ENCODE measurements at regions of chr5 and their contacts with region 1.

Region 1: DNA sequence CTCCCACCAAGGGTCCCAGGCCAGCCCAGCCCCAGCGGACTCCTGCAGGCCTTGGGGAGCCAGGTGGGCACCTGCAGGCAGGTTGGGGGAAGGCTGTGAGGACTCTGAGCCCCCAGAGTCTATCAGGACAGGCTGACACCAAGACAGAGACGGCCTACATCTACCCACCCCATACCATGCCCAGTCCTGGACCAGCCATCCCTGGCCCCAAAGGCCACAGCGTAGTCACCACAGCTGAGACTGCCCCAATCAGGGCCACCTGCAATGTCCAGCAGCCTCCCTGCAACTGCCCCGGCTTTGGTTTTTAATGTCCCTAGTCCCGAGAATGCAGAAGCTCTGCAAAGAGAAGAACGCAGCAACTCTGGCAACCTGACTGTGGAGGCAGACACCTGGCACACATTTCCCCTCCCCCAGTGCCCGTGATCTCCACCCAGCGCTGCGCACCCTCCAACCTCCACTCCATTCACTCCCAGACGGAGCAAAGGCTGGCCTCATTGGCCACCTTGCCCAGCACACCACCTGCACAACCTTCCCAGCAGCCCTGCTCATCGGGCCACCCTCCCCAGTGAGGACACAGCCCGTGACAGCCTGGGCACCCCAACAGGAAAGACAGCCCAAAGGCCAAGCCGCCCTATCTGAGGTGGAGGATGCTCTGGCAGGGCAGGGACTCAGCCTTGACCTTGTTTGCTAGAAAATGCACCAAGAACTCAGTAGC is 14.9 kb downstream of the ADAMTS2 start:
- DNase-seq: peak in 3 of 5 donors; percentile 12 to 37 (median 14)
- ATAC-seq: no peak
- H3K4me3 ChIP-seq: no peak overlapping the region
- H3K27ac ChIP-seq: no peak overlapping the region
- H3K4me1 ChIP-seq: peaks cover 0 to 14% (median 0%) of the 10 kb centered on the region in 12 donors
- H3K27me3 ChIP-seq: peaks cover 0 to 12% (median 0%) of the 10 kb centered on the region in 9 donors
- CTCF ChIP-seq: no peak
- POLR2A ChIP-seq: no peak

Region 2: DNA sequence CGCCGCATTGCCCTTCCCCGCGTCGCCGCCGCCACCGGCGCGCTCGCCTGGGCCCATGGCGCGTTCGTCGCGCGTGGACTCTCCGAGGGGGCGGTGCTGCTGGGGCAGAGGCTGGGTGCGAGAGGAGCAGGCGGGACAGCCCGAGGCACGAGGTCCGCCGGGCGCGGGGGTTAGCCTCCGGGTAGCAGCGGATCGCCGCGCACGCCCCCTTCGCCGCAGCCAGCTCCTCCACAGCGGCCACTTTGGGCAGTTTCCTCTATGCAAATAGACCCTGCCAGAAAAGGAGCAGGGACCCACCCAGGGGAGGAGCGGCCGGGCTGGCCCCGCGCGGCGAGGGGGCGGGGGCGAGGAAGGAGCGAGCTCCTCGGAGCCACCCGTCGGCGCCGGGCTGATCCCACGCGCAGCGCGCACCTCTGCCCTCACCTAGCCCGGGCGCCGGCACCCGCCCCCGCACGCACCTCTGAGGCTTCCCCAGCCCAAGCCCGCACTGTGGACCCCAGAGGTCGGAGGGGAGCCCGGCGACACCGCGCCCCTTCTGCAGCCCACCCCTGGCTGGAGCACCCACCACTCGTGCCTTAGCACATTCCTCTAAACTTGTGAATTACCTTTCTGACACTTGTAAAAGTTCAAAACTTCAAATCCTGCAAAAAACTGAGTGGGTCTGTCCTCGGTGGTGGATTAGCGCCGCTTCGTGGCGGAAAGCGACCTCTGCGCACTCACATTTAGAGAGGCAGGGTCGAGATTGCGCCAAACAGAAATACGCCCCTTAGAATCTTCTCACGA is 740.0 kb before region 1 on chr5 and contains the start of gene COL23A1:
- intact Hi-C with region 1: no loop called
- DNase-seq: peak; percentile 75 to 87 (median 80)
- ATAC-seq: peak; percentile 64 to 91 (median 86)
- H3K4me3 ChIP-seq: peak within 1 kb of the TSS; percentile 17 to 66 (median 56)
- H3K27ac ChIP-seq: peak within 1 kb of the TSS in 11 of 12 donors; percentile 54 to 86 (median 78)
- H3K4me1 ChIP-seq: peaks cover 0 to 39% (median 15%) of the 10 kb centered on the region in 12 donors
- H3K27me3 ChIP-seq: peaks cover 0 to 21% (median 9%) of the 10 kb centered on the region in 9 donors
- CTCF ChIP-seq: peak; percentile 41 to 80 (median 66)
- POLR2A ChIP-seq: no peak
- total RNA-seq, gene COL23A1: 6.0 to 33.0 (median 21.2) TPM

Region 3: GRCh38 chr5:178777541-178777940 is 552.8 kb before region 1 on chr5:
- intact Hi-C with region 1: no loop called
- DNase-seq: peak in 1 of 5 donors; percentile 26
- ATAC-seq: peak in 1 of 4 donors; percentile 33
- H3K4me3 ChIP-seq: no peak overlapping the region
- H3K27ac ChIP-seq: no peak overlapping the region
- H3K4me1 ChIP-seq: no peaks in the 10 kb centered on the region
- H3K27me3 ChIP-seq: peaks cover 0 to 13% (median 0%) of the 10 kb centered on the region in 9 donors
- CTCF ChIP-seq: no peak
- POLR2A ChIP-seq: no peak

Region 4: DNA sequence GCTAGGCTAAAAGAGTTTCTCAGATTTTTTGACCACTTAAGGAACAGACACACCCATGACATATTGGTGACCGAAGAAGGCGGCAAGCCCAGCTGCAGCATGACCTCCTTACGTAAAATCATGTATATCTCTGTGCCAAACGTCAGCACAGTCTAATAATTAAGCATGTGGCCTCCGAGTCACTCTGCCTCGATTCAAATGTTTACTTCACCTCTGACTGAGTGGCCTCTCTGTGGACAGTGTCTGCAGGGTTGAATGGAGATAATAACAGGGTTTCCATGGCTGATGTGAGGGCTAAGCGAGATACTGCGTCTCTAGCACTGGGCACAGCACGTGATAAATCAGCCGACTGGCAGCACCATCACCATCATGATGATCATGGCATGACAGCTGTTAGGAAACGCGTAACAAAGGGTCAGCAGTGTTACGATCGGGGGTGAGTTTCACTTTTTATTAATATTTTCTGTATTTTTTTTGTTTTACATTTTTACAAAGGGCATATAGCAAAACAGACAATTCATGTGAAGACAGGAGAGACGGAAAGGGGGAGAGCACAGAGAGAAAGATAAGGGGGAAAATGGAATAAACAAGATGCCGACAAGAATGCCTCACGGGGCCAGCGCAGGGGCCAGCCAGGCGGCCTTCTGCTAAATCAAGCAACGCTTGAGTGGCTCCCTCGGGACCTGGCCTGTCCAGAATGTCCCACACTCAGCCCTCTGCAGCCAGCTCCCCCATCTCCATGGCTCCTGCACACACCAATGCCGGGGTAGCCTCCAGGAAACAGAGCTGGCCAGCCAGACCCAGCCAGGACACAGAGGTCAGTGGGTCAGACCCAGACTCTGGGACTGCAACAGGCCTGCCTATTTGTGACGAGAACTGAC is 45.4 kb before region 1 on chr5:
- intact Hi-C with region 1: loop called in 1 of 10 experiments (anchors 5 kb)
- DNase-seq: peak; percentile 72 to 91 (median 78)
- ATAC-seq: peak; percentile 74 to 85 (median 79)
- H3K4me3 ChIP-seq: peak overlapping the region in 6 of 12 donors; percentile 1 to 27 (median 12)
- H3K27ac ChIP-seq: peak overlapping the region in 7 of 12 donors; percentile 5 to 45 (median 29)
- H3K4me1 ChIP-seq: peaks cover 0 to 42% (median 6%) of the 10 kb centered on the region in 12 donors
- H3K27me3 ChIP-seq: no peaks in the 10 kb centered on the region
- CTCF ChIP-seq: no peak
- POLR2A ChIP-seq: no peak